Sigmoid colon (tissue), 7 donors: ENCODE measurements at regions of chr14 and their contacts with region 1.

Region 1: DNA sequence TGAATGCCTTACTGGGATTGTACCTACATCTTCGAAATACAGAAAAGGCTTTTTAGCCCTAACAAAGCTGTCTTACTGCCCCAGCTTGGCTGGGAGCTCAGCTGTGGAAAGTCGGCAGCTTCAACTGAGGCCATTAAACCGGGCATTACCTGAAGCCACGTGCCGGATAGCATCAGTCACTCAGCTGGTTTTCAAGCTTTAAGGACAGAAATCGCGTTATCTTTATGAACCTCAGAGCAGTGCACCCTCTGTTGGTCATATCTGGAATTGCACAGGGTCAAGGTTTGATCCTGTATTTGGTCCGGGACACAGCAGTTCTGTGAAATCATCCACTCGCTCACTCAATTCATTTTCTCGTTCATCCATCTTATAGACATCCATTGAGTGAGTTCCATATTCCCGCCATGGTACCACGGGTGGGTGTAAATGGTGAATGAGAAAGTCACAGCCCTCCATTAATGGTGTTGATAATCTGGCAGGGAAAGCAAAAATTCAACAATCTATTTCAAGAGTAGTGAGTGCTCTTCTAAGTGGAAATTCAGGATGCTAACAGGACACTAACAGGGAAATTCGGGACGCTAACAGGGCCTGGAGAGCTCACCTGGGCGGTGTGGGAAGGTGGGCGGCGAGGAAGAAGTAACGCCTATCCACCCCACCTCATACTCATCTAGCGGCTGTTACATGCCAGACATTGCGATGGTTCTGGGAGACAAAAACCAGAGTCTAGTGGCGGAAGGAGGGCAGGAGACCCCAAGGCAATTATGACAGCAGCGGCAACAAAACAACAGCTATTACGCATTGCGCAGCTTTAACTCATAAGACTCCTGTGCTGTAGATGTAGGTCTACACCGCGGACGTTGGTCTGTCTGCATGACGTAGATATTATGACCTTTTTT is 60.6 kb upstream of the TCL1A start:
- DNase-seq: no peak
- H3K4me3 ChIP-seq: no peak overlapping the region
- H3K27ac ChIP-seq: no peak overlapping the region
- H3K4me1 ChIP-seq: no peaks in the 10 kb centered on the region
- H3K27me3 ChIP-seq: no peaks in the 10 kb centered on the region
- CTCF ChIP-seq: peak in 3 of 4 experiments; percentile 61 to 81 (median 74)
- EP300 ChIP-seq: no peak
- POLR2A ChIP-seq: no peak

Region 2: DNA sequence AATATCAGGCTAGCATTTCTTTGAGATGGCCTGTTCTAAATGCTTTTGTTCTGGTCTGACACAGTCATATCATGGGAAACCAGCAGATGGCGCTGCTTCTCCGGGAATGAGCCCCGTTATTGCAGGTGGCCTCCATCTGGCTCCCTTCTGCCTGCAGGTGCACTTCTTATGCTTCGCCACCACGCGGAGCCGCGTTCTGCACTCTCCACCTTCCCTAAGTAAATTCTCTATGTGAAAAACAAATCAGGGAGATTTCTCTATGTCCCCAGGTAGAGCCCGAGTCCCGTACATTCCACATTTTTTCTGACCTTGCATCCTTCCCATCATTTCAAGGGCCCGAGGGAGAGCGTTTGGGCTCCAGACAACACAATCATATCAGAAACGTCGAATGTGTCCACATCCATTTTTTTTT is 213.5 kb before region 1 on chr14:
- intact Hi-C with region 1: loop called (anchors 5 kb)
- DNase-seq: peak; percentile 87
- H3K4me3 ChIP-seq: no peak overlapping the region
- H3K27ac ChIP-seq: no peak overlapping the region
- H3K4me1 ChIP-seq: no peaks in the 10 kb centered on the region
- H3K27me3 ChIP-seq: no peaks in the 10 kb centered on the region
- CTCF ChIP-seq: peak; percentile 83 to 97 (median 93)
- EP300 ChIP-seq: no peak
- POLR2A ChIP-seq: no peak